ENCODE measurements at regions of chr16 and their contacts with region 1.

Region 1: DNA sequence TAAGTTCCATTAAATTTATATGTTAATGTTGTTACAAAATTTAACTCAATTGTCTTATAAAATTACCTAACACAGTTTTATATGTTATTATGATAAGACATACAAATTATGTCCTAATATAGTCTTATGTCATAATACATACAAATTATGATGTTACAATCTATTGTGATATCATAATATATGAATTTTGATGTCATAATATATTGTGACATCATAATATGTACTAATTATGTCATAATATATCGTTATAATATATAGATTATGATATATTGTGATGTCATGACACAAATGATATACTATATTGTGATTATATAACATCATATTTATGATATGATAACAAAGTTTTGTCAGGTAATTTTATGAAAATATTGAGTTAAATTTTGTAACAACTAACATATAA is 1789.6 kb downstream of the TP53TG3F start:
- DNase-seq: no peak
- H3K4me3 ChIP-seq: no peak overlapping the region
- H3K27ac ChIP-seq: no peak overlapping the region
- H3K4me1 ChIP-seq: no peaks in the 10 kb centered on the region
- H3K27me3 ChIP-seq: no peaks in the 10 kb centered on the region
- CTCF ChIP-seq: no peak
- POLR2A ChIP-seq: no peak

Region 2: DNA sequence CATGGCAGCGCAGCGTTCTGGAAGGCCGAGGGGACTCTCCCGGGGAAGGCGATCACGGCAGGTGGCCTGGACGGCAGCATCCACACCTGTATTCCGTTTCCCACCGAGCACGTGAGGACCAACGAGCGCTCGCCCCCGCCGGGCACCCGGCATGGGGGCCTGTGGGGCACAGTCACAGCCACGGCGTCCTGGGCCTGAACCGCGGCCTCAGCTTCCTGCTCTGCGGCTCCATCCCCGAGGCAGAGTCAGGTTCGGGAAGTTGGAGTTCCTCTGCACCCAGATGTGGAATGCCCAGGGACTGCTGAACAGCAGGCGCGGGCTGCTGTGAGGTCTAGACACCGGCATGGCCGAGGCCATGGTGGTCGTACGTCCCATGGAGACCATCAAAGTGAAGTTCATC is 75.8 kb before region 1 on chr16:
- intact Hi-C with region 1: no loop called
- DNase-seq: no peak
- H3K4me3 ChIP-seq: peak overlapping the region in 1 of 2 donors; percentile 7
- H3K27ac ChIP-seq: no peak overlapping the region
- H3K4me1 ChIP-seq: no peaks in the 10 kb centered on the region
- H3K27me3 ChIP-seq: no peaks in the 10 kb centered on the region
- CTCF ChIP-seq: no peak
- POLR2A ChIP-seq: no peak

Region 3: GRCh38 chr16:35195173-35195863 is 53.7 kb before region 1 on chr16:
- intact Hi-C with region 1: loop called (anchors 10 kb)
- DNase-seq: no peak
- H3K4me3 ChIP-seq: peak overlapping the region in 1 of 2 donors; percentile 23
- H3K27ac ChIP-seq: no peak overlapping the region
- H3K4me1 ChIP-seq: no peaks in the 10 kb centered on the region
- H3K27me3 ChIP-seq: no peaks in the 10 kb centered on the region
- CTCF ChIP-seq: no peak
- POLR2A ChIP-seq: no peak

Measured in testis (tissue), 5 donors.